Aorta (tissue), 5 donors: ENCODE measurements at regions of chr17 and their contacts with region 1.

Region 1: GRCh38 chr17:47229535-47230443 is 20.6 kb downstream of the MYL4 start:
- DNase-seq: peak; percentile 90 to 92
- ATAC-seq: peak; percentile 91
- H3K4me3 ChIP-seq: peak overlapping the region in 1 of 2 donors; percentile 15
- H3K27ac ChIP-seq: peak overlapping the region in 1 of 2 donors; percentile 61
- H3K4me1 ChIP-seq: no peaks in the 10 kb centered on the region
- H3K27me3 ChIP-seq: no peaks in the 10 kb centered on the region

Region 2: GRCh38 chr17:47145351-47145750 is 84.4 kb before region 1 on chr17:
- intact Hi-C with region 1: no loop called
- DNase-seq: no peak
- ATAC-seq: no peak
- H3K4me3 ChIP-seq: no peak overlapping the region
- H3K27ac ChIP-seq: no peak overlapping the region
- H3K4me1 ChIP-seq: no peaks in the 10 kb centered on the region
- H3K27me3 ChIP-seq: no peaks in the 10 kb centered on the region

Region 3: DNA sequence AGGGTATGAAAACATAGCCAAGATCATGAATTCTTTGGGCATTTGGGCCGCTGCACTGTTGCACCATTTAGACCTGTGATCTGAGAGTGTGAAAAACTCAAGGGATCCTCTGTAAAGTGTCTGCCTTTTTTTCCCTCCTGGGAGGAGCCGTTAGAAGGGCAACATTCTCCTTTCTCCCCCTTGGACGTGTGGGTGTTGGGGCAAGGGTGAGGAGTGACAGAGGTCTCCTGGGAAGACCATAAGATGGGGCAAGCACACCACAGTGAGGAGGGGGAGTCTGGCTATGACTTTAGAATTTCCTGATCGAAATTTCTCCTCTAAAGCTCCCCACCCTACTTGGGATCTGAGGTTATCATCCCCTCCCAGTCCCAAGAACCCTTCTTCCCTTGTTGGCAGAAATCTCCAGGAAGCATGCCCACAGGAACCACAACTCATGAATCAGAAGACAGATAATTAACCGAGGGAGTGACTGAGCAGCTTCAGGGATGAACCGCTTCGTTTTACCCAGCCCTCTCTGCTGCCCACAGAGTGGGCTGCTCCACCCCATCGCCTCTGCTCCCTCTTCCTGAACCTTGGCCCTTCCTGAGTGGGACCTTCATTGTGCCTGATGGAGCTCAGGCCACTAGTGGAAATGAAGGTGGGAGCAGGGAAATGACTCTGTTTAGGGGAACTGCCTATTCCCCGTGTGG is 28.0 kb after region 1 on chr17:
- intact Hi-C with region 1: no loop called
- DNase-seq: no peak
- ATAC-seq: no peak
- H3K4me3 ChIP-seq: peak overlapping the region in 1 of 2 donors; percentile 26
- H3K27ac ChIP-seq: no peak overlapping the region
- H3K4me1 ChIP-seq: peaks cover 4 to 8% of the 10 kb centered on the region in 2 donors
- H3K27me3 ChIP-seq: no peaks in the 10 kb centered on the region

Region 4: DNA sequence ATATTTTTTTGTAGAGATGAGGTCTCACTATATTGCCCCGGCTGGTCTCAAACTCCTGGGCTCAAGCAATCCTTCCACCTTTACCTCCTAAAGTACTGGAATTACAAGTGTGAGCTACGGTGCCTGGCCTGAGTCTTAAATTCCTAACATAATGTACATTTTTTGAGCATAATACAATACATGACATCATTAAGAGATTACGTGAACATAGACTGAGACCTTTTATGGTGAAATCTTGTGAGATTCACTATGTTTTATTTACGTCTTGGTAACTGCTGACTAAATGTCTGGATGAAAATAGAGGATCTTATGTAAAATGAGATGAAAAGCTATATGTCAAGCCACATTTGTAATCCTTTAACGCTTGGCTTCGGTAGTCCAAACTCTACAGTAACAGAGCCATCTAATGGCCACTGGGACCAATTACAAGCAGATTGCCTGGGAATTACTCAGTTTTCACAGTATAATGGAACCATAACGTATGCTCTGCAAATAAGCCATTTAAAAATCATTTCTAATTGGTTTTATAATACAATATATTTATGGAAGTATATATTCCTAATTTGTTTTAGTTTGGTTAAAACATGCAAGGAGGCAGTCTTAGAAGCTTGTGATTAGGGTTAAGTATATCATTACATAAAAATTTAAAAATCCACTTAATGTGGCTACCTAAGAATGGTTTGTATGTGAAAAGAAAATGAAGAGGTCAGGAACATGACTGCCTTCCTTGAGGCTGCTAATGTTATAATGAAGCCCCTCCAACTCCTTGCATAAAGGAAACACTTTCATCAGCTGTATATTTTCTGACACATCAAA is 85.9 kb after region 1 on chr17:
- intact Hi-C with region 1: loop called (anchors 2 to 5 kb)
- DNase-seq: no peak
- ATAC-seq: peak; percentile 86
- H3K4me3 ChIP-seq: no peak overlapping the region
- H3K27ac ChIP-seq: peak overlapping the region; percentile 60 to 91
- H3K4me1 ChIP-seq: peaks cover 0 to 6% of the 10 kb centered on the region in 2 donors
- H3K27me3 ChIP-seq: no peaks in the 10 kb centered on the region

Region 5: DNA sequence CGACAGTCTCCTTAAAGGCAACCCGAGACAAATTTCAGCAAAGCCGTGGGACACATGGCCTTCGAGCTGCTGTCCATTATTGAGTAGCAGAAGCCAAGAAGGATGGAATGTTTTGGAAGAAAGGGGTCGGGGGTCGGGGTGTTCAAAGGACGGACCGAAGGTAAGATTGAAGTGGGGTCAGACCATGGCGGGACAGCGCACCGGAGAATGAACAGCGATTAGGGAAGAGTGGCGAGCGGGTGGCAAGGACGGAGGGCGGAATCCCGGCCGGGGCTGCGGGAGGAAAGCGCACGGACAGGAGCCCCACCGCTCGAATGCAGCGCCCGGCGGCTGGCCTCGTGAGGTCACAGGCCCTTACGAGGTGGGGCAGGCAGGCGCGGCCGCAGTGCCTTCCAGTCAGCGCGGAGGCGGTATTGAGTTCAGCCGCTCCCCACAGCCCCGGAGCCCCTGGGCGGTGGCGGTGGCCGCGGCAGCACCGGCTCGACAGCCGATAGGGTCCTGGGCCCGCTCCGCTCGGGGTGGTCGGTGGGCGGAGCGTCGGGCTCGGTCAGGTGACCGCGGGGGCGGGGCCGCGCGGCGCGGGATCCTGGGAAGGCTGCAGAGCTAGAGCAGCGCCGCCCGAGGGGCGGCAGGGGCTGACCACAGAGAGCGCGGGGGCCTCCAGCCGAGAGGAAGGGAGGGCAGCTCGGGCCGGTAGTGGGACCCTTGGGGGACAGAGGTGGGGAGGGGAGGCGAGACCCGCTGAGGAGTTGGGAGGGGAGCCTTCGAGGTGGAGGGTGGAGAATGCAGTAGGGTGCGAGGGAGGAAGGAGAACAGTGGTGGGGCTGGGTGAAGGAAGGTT is 93.8 kb after region 1 on chr17 and contains the start of gene EFCAB13:
- intact Hi-C with region 1: loop called in 1 of 2 experiments (anchors 5 kb)
- DNase-seq: peak; percentile 94 to 97
- ATAC-seq: peak; percentile 99
- H3K4me3 ChIP-seq: peak within 1 kb of the TSS; percentile 46 to 58
- H3K27ac ChIP-seq: peak within 1 kb of the TSS; percentile 38 to 57
- H3K4me1 ChIP-seq: no peaks in the 10 kb centered on the region
- H3K27me3 ChIP-seq: no peaks in the 10 kb centered on the region
- total RNA-seq, gene EFCAB13: 28.1 to 34.2 TPM

Region 6: GRCh38 chr17:47605011-47605410 is 375.2 kb after region 1 on chr17:
- intact Hi-C with region 1: loop called (anchors 5 to 10 kb)
- DNase-seq: no peak
- ATAC-seq: no peak
- H3K4me3 ChIP-seq: peak overlapping the region in 1 of 2 donors; percentile 34
- H3K27ac ChIP-seq: no peak overlapping the region
- H3K4me1 ChIP-seq: peaks cover 0 to 1% of the 10 kb centered on the region in 2 donors
- H3K27me3 ChIP-seq: no peaks in the 10 kb centered on the region

Region 7: DNA sequence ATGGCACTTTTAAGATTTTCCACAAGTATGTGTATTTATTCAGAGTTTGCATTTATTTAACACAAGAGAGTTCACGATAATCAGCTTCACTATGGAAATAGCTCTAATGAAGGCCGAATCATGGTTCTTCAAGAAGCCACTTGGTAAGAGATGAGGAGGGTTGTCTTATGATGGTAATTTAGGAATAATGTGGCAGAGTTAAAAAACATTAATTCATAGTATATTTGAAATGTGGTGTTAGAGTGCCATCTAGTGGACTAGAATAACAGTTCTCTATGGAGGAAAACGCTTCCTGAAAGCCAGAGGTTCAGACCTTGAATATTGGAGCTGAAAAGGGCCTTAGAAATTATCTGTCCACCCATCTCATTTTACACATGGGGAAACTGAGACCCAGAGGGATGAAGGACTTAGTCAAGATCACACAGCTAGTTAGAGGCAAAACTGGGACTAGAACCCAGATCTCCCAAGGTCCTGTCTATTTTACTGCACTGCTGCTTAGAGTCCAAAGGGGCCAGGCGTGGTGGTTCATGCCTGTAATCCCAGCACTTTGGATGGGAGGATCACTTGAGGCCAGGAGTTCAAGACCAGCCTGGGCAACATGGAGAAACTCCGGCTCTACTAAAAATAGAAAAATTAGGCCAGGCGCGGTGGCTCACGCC is 386.1 kb after region 1 on chr17:
- intact Hi-C with region 1: loop called in 1 of 2 experiments (anchors 10 kb)
- DNase-seq: no peak
- ATAC-seq: peak; percentile 57
- H3K4me3 ChIP-seq: no peak overlapping the region
- H3K27ac ChIP-seq: no peak overlapping the region
- H3K4me1 ChIP-seq: no peaks in the 10 kb centered on the region
- H3K27me3 ChIP-seq: no peaks in the 10 kb centered on the region